Posterior cingulate gyrus (tissue), 11 donors: ENCODE measurements at regions of chr2 and their contacts with region 1.

Region 1: GRCh38 chr2:27050281-27050995 is 1.0 kb upstream of the AGBL5 start:
- DNase-seq: peak; percentile 89 to 99 (median 93)

Region 2: DNA sequence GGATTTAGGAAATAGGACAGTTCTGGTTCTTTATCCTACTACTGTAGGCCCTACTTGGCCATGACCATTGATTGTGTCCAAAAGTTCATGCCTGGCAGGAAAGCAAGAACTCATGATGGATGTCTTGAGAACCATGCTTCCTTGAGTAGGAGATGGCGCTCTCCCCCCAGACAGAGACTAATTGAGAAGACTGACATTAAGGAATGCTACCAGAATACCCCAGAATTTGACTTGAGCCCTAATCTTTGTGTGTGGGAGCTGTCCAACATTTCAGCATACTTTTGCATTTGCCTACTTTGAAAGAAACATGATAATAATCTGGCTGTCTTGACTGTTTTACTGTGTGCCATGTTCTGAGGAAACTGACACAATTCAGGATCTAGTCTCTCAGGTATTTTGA is 56.7 kb before region 1 on chr2:
- intact Hi-C with region 1: no loop called
- DNase-seq: no peak

Region 3: GRCh38 chr2:27032495-27033252 is 17.8 kb before region 1 on chr2 and contains the start of gene TMEM214:
- intact Hi-C with region 1: loop called (anchors 2 kb)
- DNase-seq: peak; percentile 79 to 99 (median 90)

Region 4: DNA sequence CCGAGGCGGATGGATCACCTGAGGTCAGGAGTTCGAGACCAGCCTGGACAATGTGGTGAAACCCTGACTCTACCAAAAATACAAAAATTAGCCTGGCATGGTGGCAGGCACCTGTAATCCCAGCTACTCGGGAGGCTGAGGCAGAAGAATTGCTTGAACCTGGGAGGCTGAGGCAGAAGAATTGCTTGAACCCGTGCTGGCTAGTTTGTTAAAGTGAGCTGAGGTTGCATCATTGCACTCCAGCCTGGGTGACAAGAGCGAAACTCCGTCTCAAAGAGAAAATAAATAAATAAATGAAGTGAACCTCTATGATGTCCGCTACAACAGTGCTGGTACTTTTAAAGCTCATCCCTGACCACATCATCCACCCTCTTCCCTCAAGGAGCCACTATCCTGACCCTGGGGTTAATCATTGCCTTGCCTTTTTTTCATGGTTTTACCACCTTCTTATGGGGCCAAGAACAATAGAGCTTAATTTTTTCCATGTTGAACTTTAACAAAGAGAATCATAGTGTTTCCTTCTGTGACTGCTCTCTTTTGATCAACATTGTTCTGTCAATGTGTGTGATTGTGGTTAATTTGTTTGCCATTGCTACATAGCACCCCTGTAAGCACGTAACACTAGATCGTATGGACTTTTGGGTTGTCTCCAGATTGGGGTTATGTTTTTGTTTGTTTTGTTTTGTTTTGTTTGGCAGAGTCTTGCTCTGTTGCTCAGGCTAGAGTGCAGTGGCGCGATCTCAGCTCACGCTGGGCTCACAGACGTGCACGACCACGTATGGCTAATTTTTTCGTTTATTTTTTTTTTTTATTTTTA is 144.3 kb after region 1 on chr2:
- intact Hi-C with region 1: no loop called
- DNase-seq: no peak